Activated CD4-positive, alpha-beta T cell treated with anti-CD3 and anti-CD28 coated beads, Interleukin-2, amount 10 ng/mL, durations not matched to agents 24 days and 14 days (primary cell): ENCODE measurements at regions of chr1 and their contacts with region 1.

Region 1: GRCh38 chr1:40951943-40952743 is 27.4 kb upstream of the CTPS1 start:
- DNase-seq: peak; percentile 89
- H3K4me3 Mint-ChIP-seq: no peak overlapping the region
- H3K27ac Mint-ChIP-seq: no peak overlapping the region
- H3K4me1 Mint-ChIP-seq: peaks cover 9% of the 10 kb centered on the region
- H3K27me3 Mint-ChIP-seq: peaks cover 26% of the 10 kb centered on the region

Region 2: GRCh38 chr1:40612345-40612831 is 339.8 kb before region 1 on chr1:
- intact Hi-C with region 1: loop called (anchors 1 kb)
- DNase-seq: peak; percentile 93
- H3K4me3 Mint-ChIP-seq: no peak overlapping the region
- H3K27ac Mint-ChIP-seq: no peak overlapping the region
- H3K4me1 Mint-ChIP-seq: no peaks in the 10 kb centered on the region
- H3K27me3 Mint-ChIP-seq: peaks cover 5% of the 10 kb centered on the region

Region 3: DNA sequence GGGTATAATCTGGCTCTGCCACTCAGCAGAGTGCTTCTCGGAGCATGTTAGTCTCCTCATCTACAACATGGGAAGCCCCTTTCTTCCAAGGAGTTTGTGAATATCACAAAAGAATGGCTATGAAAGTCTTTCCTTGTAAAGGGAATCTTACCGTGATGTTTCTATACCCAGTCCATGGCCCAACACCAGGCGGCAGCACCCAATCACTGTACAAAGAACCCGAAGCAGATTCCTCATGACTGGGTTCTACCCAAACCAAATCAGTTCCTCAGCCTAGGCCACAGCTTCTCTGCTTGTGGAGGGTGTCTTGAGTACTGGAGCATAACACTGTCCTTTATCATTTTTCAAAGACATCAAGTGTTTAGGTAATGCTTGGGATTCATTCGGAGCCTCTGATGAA is 86.0 kb after region 1 on chr1:
- intact Hi-C with region 1: no loop called
- DNase-seq: no peak
- H3K4me3 Mint-ChIP-seq: no peak overlapping the region
- H3K27ac Mint-ChIP-seq: no peak overlapping the region
- H3K4me1 Mint-ChIP-seq: no peaks in the 10 kb centered on the region
- H3K27me3 Mint-ChIP-seq: no peaks in the 10 kb centered on the region

Region 4: GRCh38 chr1:41360993-41361753 is 409.0 kb after region 1 on chr1 and contains the start of gene FOXO6:
- intact Hi-C with region 1: no loop called
- DNase-seq: peak; percentile 97
- H3K4me3 Mint-ChIP-seq: peak within 1 kb of the TSS; percentile 66
- H3K27ac Mint-ChIP-seq: peak within 1 kb of the TSS; percentile 19
- H3K4me1 Mint-ChIP-seq: no peaks in the 10 kb centered on the region
- H3K27me3 Mint-ChIP-seq: peaks cover 51% of the 10 kb centered on the region
- total RNA-seq, gene FOXO6: not detected in 2 replicates